Naive thymus-derived CD4-positive, alpha-beta T cell (primary cell): ENCODE measurements at regions of chr1 and their contacts with region 1.

Region 1: GRCh38 chr1:8970870-8971337 is 25.2 kb downstream of the CA6 start:
- DNase-seq: peak in 8 of 9 donors; percentile 59 to 84 (median 76)
- ATAC-seq: peak; percentile 91
- H3K4me3 ChIP-seq: peak overlapping the region; percentile 59
- H3K4me3 Mint-ChIP-seq: peak overlapping the region; percentile 94 to 100 (median 100)
- H3K27ac ChIP-seq: peak overlapping the region; percentile 87
- H3K27ac Mint-ChIP-seq: peak overlapping the region; percentile 89 to 99 (median 98)
- H3K4me1 ChIP-seq: peaks cover 7 to 22% of the 10 kb centered on the region in 2 donors
- H3K4me1 Mint-ChIP-seq: peaks cover 34 to 60% (median 52%) of the 10 kb centered on the region in 7 donors
- H3K27me3 ChIP-seq: no peaks in the 10 kb centered on the region
- H3K27me3 Mint-ChIP-seq: no peaks in the 10 kb centered on the region

Region 2: DNA sequence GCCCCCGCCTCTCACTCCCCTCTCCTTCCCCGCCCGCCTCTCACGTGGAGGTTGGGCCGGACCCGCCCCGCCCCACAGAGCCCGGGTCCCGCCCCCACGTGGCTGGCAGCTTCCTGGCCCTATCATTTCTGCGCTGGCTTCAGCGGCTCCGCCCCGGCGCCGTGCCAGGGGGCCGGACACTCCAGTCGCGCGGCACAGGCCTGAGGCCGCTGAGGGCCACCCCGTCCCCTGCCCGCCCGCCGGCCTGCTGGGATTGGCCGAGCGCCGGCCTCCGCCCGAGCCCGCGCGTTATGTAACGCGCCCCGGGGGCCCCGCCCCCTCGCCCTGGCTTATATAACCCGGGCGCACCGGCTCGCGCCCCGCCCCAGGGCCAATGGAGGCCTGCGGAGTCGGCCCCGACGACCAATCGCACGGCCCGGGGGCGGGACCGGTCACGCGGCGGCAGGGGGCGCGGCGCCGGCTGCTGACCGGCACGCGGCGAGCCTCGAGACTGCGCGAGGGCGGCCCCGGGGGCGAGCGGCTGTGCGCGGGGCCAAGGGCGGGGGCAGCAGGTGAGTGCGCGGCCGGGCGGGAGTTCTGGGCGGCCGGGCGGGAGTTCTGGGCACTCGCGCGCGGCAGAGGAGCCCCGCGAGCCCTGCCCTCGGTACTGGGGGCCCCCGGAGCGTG is 1186.9 kb before region 1 on chr1 and contains the start of gene PER3:
- CTCF ChIA-PET with region 1: no interaction called
- POLR2A ChIA-PET with region 1: no interaction called
- intact Hi-C with region 1: loop called in 1 of 2 experiments (anchors 10 kb)
- DNase-seq: peak; percentile 84 to 97 (median 94)
- ATAC-seq: peak; percentile 93
- H3K4me3 ChIP-seq: peak within 1 kb of the TSS; percentile 58
- H3K4me3 Mint-ChIP-seq: peak within 1 kb of the TSS; percentile 67 to 85 (median 76)
- H3K27ac ChIP-seq: peak within 1 kb of the TSS; percentile 99
- H3K27ac Mint-ChIP-seq: peak within 1 kb of the TSS in 8 of 9 donors; percentile 63 to 91 (median 82)
- H3K4me1 ChIP-seq: peaks cover 8 to 17% of the 10 kb centered on the region in 2 donors
- H3K4me1 Mint-ChIP-seq: peaks cover 18 to 39% (median 28%) of the 10 kb centered on the region in 7 donors
- H3K27me3 ChIP-seq: no peaks in the 10 kb centered on the region
- H3K27me3 Mint-ChIP-seq: peaks cover 0 to 16% (median 0%) of the 10 kb centered on the region in 5 donors
- total RNA-seq, gene PER3: 2.2 to 10.4 (median 5.1) TPM

Region 3: GRCh38 chr1:8941906-8942305 is 29.0 kb before region 1 on chr1:
- CTCF ChIA-PET with region 1: interaction called, 6 read pairs
- POLR2A ChIA-PET with region 1: interaction called, 39 read pairs
- intact Hi-C with region 1: loop called (anchors 1 kb)
- DNase-seq: no peak
- ATAC-seq: no peak
- H3K4me3 ChIP-seq: no peak overlapping the region
- H3K4me3 Mint-ChIP-seq: peak overlapping the region in 1 of 10 donors; percentile 44
- H3K27ac ChIP-seq: no peak overlapping the region
- H3K27ac Mint-ChIP-seq: peak overlapping the region in 4 of 9 donors; percentile 38 to 86 (median 63)
- H3K4me1 ChIP-seq: peaks cover 19 to 80% of the 10 kb centered on the region in 2 donors
- H3K4me1 Mint-ChIP-seq: peaks cover 65 to 90% (median 81%) of the 10 kb centered on the region in 7 donors
- H3K27me3 ChIP-seq: no peaks in the 10 kb centered on the region
- H3K27me3 Mint-ChIP-seq: no peaks in the 10 kb centered on the region

Region 4: DNA sequence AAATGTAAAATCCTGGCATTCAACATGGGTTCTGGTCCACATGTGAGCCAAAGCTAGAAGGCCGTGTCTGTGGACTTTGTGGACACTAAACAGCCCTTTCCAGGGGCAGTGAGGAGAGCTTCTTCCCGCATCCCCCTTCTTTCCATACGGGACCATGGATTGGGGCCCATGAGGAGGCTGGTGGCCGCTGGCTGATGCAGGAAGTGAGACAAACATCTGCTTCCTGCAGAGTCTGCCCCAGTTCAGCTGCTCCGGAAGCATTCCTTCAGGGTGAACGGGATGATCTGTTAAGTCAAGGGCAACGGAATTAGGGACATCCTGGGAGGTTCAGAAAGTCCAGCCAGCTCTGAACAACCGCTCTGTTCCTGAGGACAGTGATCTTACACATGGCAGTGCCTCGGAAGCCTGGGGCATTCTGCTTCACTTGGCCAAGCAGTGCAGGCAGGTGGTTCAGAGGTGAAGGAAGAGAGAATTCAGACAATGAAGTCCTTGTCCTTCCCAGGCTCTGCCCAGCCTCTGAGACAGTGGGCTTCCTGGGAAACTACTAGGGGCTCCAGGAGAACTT is 23.7 kb before region 1 on chr1:
- CTCF ChIA-PET with region 1: interaction called, 4 read pairs
- POLR2A ChIA-PET with region 1: interaction called, 39 read pairs
- intact Hi-C with region 1: loop called (anchors 1 kb)
- DNase-seq: peak in 2 of 9 donors; percentile 19 to 36
- ATAC-seq: no peak
- H3K4me3 ChIP-seq: no peak overlapping the region
- H3K4me3 Mint-ChIP-seq: peak overlapping the region; percentile 21 to 80 (median 61)
- H3K27ac ChIP-seq: peak overlapping the region; percentile 57
- H3K27ac Mint-ChIP-seq: peak overlapping the region; percentile 68 to 98 (median 90)
- H3K4me1 ChIP-seq: peaks cover 16 to 68% of the 10 kb centered on the region in 2 donors
- H3K4me1 Mint-ChIP-seq: peaks cover 42 to 82% (median 61%) of the 10 kb centered on the region in 7 donors
- H3K27me3 ChIP-seq: no peaks in the 10 kb centered on the region
- H3K27me3 Mint-ChIP-seq: no peaks in the 10 kb centered on the region

Region 5: GRCh38 chr1:8955406-8955805 is 15.5 kb before region 1 on chr1:
- CTCF ChIA-PET with region 1: no interaction called
- POLR2A ChIA-PET with region 1: interaction called, 15 read pairs
- intact Hi-C with region 1: no loop called
- DNase-seq: no peak
- ATAC-seq: no peak
- H3K4me3 ChIP-seq: no peak overlapping the region
- H3K4me3 Mint-ChIP-seq: no peak overlapping the region
- H3K27ac ChIP-seq: no peak overlapping the region
- H3K27ac Mint-ChIP-seq: peak overlapping the region in 7 of 9 donors; percentile 24 to 84 (median 70)
- H3K4me1 ChIP-seq: peaks cover 0 to 18% of the 10 kb centered on the region in 2 donors
- H3K4me1 Mint-ChIP-seq: peaks cover 0 to 58% (median 37%) of the 10 kb centered on the region in 7 donors
- H3K27me3 ChIP-seq: no peaks in the 10 kb centered on the region
- H3K27me3 Mint-ChIP-seq: no peaks in the 10 kb centered on the region

Region 6: DNA sequence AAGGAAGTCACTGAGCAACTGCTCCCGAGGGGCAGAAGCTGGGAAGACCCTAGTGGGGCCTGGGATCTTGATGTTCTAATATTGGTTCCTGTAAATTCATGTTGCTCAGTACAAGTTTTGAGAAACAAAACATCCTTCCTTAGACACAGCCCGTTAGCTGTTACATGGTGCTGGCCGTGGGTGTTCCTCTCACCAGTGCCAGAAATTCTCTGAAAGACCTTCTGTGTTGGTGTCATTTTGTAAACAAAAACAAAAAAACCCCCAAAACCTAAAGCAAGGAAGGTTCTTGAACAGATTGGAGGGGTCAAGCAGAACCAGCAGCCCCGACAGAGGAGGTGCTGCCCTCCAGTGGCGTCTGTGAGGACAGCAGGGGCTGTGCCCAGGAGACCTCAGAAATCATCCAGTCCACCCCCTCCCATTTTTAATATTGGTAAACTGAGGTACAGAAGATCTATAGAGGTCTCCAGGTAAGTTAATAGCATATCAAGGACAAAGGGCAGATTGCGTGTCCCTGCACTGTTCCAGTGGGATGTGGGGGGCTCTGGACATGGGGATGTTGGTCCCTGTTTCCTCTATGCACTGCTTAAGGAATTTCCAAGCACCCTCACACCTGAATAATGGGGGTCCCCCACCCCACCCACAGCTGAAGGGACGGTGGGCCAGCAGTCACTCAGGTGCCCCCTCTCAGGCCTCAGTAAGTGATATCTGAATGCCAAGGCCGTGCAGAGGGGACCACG is 17.1 kb after region 1 on chr1:
- CTCF ChIA-PET with region 1: interaction called, 24 read pairs
- POLR2A ChIA-PET with region 1: interaction called, 100 read pairs
- intact Hi-C with region 1: loop called (anchors 1 kb)
- DNase-seq: peak; percentile 19 to 78 (median 65)
- ATAC-seq: peak; percentile 89
- H3K4me3 ChIP-seq: no peak overlapping the region
- H3K4me3 Mint-ChIP-seq: peak overlapping the region; percentile 36 to 85 (median 73)
- H3K27ac ChIP-seq: peak overlapping the region; percentile 65
- H3K27ac Mint-ChIP-seq: peak overlapping the region; percentile 57 to 99 (median 93)
- H3K4me1 ChIP-seq: peaks cover 4 to 22% of the 10 kb centered on the region in 2 donors
- H3K4me1 Mint-ChIP-seq: peaks cover 9 to 63% (median 41%) of the 10 kb centered on the region in 7 donors
- H3K27me3 ChIP-seq: no peaks in the 10 kb centered on the region
- H3K27me3 Mint-ChIP-seq: no peaks in the 10 kb centered on the region